ENCODE measurements at regions of chr18 and their contacts with region 1.

Region 1: GRCh38 chr18:24189007-24189528 is 50.2 kb downstream of the CABYR start:
- DNase-seq: no peak
- H3K4me3 ChIP-seq: no peak overlapping the region
- H3K27me3 ChIP-seq: no peaks in the 10 kb centered on the region
- CTCF ChIP-seq: no peak

Region 2: DNA sequence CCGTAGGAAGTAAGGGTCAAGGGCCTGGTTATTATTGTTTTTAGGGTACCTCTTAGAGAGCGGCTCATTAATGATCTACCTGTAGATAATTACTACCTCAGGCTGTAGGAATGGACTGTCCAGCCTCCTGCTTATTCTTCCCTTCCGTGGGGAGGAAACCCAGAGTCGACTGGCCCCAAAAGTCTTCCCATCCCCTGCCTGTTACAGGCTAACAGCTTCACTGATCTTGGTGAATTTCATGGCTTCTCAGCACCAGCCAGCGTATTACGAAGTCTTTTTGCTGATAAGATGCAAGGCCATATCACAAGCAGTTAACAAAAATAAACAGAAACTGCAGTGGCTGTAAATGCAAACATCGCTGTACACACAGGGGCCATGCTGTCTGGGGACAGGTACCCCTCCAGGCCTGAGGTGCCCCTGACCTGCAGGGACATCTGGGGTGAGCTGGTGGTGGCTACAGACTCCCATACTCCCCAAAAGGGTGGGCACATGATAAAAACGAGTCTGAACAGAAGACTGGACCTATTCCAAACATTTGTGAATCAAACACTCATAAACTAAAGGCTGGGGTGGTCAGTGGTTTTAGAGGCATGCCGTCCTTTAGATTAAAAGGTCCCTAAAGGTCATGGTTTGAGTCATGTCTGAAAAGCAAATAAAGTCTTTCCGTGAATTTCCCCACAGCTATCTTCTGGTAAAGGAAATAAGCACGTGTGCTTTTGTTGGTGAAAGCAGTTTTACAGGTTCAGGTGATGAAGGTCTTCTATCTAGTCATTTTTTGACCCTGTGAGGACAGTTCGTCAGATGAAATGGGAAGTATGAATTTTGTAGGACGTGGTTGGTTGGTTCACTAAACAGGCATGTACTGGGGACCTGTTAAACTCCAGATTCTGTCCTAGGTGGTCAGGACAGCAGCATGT is 137.8 kb before region 1 on chr18:
- CTCF ChIA-PET with region 1: no interaction called
- POLR2A ChIA-PET with region 1: no interaction called
- DNase-seq: no peak
- H3K4me3 ChIP-seq: no peak overlapping the region
- H3K27me3 ChIP-seq: no peaks in the 10 kb centered on the region
- CTCF ChIP-seq: no peak

Region 3: DNA sequence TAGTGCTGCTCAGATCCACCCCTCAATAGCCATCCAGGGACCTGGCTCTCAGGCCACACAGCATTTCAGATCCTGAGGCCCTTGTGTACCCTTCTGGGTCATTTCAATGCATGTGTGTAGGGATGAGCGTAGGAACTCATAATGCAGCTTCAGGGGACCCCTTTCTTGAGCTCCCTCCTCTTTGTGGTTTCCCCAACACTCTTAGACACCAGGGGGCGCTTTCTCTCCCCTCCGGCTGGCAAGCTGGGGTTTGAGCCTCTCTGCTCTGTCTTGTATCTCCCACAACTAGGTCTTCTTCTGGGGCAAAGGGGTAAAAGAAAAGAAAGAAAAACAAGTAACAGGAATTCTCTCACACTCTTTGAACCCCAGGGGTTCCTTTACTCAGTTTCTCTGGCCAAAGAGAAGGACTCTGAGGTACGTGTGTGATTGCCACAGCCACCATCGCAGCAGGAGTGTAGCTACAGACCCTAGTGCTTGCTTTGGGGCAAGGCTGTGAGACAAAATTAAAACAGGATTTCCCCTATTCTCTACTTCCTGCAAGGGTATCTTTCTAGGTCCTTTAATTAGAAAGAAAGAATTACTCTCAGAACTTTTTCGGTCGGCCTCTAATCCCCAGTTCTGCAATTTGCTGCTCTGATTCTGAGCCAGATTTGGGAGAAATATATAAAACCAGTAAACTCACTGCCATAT is 12.2 kb before region 1 on chr18:
- CTCF ChIA-PET with region 1: interaction called, 15 read pairs
- POLR2A ChIA-PET with region 1: no interaction called
- DNase-seq: no peak
- H3K4me3 ChIP-seq: no peak overlapping the region
- H3K27me3 ChIP-seq: no peaks in the 10 kb centered on the region
- CTCF ChIP-seq: peak; percentile 85

Region 4: GRCh38 chr18:24208270-24209035 is 19.4 kb after region 1 on chr18:
- CTCF ChIA-PET with region 1: no interaction called
- POLR2A ChIA-PET with region 1: no interaction called
- DNase-seq: no peak
- H3K4me3 ChIP-seq: no peak overlapping the region
- H3K27me3 ChIP-seq: no peaks in the 10 kb centered on the region
- CTCF ChIP-seq: no peak

Measured in BJ (cell line).